Activated CD4-positive, alpha-beta T cell treated with anti-CD3 and anti-CD28 coated beads, Interleukin-2, amount 10 ng/mL, durations not matched to agents 24 days and 14 days (primary cell): ENCODE measurements at regions of chr17 and their contacts with region 1.

Region 1: DNA sequence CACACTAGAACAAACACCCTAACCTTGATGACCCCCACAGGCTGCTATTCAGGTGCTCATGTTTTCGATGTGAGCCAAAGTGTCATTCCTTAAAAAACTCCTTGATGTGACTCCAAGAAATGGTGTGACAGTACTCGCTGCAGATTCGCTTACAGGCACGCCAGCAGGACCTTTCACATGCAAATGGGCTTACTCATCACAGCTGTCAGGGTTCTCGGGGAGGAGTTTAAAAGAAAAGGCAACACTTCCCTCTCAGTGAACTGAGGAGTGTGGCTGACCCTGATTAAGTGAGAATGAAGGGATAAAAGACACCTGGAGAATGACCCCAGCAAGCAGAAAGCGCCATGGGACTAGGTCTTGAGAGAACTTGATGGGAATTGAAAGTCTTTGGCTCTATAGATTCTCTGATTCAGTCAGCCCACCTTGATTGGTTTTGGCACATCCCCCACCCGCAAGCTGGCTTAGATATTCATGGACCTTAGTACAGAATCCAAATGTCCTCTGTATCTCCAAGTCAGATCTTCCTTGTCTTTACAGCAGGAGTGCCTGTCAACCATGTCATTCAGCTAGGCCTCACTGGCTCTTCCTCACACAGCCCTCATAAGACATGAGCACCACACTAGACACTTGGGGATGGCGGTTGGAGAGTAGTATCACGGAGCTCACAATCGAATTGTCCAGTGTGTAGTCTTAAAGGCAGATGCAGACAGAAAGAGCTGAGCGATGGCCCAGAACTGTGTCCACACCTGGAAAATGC is 82.6 kb downstream of the HIC1 start:
- DNase-seq: no peak
- H3K4me3 Mint-ChIP-seq: no peak overlapping the region
- H3K27ac Mint-ChIP-seq: no peak overlapping the region
- H3K4me1 Mint-ChIP-seq: peaks cover 19% of the 10 kb centered on the region
- H3K27me3 Mint-ChIP-seq: no peaks in the 10 kb centered on the region

Region 2: GRCh38 chr17:2070241-2071023 is 67.1 kb before region 1 on chr17:
- intact Hi-C with region 1: no loop called
- DNase-seq: peak; percentile 89
- H3K4me3 Mint-ChIP-seq: peak overlapping the region; percentile 74
- H3K27ac Mint-ChIP-seq: peak overlapping the region; percentile 97
- H3K4me1 Mint-ChIP-seq: peaks cover 58% of the 10 kb centered on the region
- H3K27me3 Mint-ChIP-seq: no peaks in the 10 kb centered on the region

Region 3: GRCh38 chr17:2122641-2123302 is 14.7 kb before region 1 on chr17:
- intact Hi-C with region 1: no loop called
- DNase-seq: no peak
- H3K4me3 Mint-ChIP-seq: peak overlapping the region; percentile 28
- H3K27ac Mint-ChIP-seq: peak overlapping the region; percentile 4
- H3K4me1 Mint-ChIP-seq: peaks cover 22% of the 10 kb centered on the region
- H3K27me3 Mint-ChIP-seq: no peaks in the 10 kb centered on the region

Region 4: GRCh38 chr17:2172077-2172851 is 34.7 kb after region 1 on chr17:
- intact Hi-C with region 1: loop called (anchors 5 kb)
- DNase-seq: no peak
- H3K4me3 Mint-ChIP-seq: no peak overlapping the region
- H3K27ac Mint-ChIP-seq: no peak overlapping the region
- H3K4me1 Mint-ChIP-seq: peaks cover 21% of the 10 kb centered on the region
- H3K27me3 Mint-ChIP-seq: no peaks in the 10 kb centered on the region

Region 5: DNA sequence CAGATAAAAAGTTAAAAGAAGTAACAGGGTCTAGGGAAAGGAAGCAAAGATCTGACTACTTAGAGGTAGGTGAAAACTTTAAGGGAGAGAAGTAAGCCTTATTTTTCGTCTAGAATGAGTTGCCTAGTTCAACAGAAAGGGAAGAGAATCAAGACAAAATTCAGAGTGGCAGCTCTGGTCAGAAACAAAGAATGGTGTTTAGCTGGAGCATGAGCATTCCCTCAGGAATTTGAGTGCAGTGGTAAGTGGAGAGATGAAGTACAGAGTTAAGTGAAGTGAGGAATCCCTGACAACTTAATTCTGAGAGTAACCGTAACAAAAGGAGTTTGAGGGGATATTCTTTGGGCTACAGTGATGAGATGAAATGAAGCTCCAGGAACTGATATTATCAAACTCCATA is 154.6 kb after region 1 on chr17:
- intact Hi-C with region 1: no loop called
- DNase-seq: no peak
- H3K4me3 Mint-ChIP-seq: no peak overlapping the region
- H3K27ac Mint-ChIP-seq: no peak overlapping the region
- H3K4me1 Mint-ChIP-seq: peaks cover 25% of the 10 kb centered on the region
- H3K27me3 Mint-ChIP-seq: no peaks in the 10 kb centered on the region